ENCODE measurements at regions of chr1 and their contacts with region 1.

Region 1: GRCh38 chr1:28877132-28877781 is 37.1 kb upstream of the EPB41 start:
- DNase-seq: peak; percentile 87
- ATAC-seq: peak; percentile 80

Region 2: GRCh38 chr1:28359592-28360239 is 517.5 kb before region 1 on chr1:
- intact Hi-C with region 1: loop called (anchors 10 kb)
- DNase-seq: no peak
- ATAC-seq: no peak

Region 3: GRCh38 chr1:28518000-28518744 is 359.1 kb before region 1 on chr1:
- intact Hi-C with region 1: loop called (anchors 5 kb)
- DNase-seq: peak; percentile 97
- ATAC-seq: peak; percentile 95

Region 4: DNA sequence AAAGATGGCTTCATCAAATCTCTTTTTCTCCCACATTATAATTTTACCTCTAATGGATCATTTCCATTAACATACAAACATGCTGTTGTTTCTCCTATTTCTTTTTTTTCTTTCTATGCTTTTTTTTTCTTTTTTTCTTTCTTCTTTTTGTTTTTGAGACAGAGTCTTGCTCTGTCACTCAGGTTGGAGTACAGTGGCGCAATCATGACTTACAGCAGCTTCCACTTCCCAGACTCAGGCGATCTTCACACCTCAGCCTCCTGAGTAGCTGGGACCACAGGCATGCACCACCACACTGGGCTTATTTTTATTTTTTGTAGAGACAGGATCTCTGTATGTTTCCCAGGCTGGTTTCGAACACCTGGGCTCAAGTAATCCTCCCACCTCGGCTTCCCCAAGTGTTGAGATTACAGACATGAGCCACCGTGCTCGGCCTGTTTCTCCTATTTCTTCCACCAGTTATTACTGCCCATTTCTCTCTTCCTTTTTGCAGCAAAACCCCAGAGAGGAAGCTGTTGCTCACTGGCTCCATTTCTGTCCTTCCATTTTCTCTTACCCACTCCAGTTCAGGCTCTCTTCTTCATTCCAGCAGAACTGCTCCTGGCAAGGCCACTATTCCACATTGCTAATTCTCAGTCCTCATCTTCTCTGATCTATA is 97.4 kb before region 1 on chr1:
- intact Hi-C with region 1: loop called (anchors 1 kb)
- DNase-seq: no peak
- ATAC-seq: no peak

Measured in Right ventricle myocardium inferior (tissue), 1 donor.